ENCODE measurements at regions of chr5 and their contacts with region 1.

Region 1: DNA sequence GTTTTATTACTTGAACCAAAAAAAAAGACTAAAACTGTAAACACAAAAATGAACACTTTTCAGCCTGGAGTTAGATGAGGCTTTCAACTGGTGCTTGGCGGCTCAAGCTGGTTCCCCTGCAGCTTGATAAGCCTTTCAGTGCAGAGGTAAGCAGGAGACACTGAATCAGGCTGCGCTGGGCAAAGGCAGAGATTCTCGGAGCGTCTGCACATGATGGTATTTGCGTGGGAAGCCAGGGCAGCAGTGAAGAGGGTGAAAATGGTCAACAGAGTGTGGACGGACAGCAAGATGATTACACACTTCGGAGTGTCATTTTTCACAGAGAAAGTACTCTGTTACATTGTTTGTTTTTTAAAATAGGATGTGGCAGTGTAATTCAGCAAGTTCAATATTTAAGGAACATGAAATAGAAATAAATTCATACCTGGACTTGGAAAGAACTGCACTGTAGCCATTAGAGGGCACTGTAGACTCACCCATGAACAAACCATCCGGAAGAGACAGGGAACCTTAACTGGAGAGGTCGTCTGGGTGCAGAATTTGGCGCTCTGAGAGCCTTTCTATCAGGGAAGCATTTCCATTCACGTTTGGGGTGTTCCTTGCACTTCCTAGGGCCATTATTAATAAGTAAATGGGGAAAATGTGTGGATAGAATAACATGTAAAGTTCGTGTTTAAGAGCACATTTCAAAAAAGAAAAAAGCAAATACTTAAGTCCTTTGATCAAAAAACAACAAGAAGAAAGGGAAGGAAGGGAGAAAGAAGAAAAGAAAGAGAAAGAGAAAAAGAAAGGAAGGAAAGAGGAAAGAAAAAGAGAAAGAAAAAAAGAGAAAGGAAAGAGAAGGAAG is 69.8 kb downstream of the ICE1 start:
- DNase-seq: no peak

Region 2: GRCh38 chr5:5398046-5398445 is 94.3 kb before region 1 on chr5:
- intact Hi-C with region 1: no loop called
- DNase-seq: no peak

Region 3: DNA sequence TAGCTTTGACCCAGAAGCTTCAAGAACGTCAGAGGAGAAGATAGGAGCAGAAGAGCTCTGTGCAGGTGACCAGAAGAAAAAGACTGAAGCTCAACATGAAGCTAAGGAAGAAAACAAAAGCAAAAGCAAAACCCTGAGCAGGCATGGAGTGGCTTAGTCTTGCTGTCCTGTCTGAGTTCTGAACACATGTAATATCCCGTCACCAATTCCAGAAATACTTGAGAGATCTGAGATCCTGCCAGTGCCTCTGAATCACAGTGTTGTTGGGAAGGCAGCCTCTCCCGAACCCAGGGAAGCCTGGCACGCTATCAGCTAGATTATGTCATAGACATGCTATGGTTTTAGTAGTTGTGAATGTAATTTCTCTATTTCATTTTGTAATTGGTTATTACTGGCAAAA is 165.9 kb after region 1 on chr5:
- intact Hi-C with region 1: loop called (anchors 10 kb)
- DNase-seq: peak; percentile 80

Region 4: GRCh38 chr5:5688194-5688924 is 196.0 kb after region 1 on chr5:
- intact Hi-C with region 1: loop called (anchors 5 kb)
- DNase-seq: no peak

Region 5: GRCh38 chr5:5795074-5795771 is 302.9 kb after region 1 on chr5:
- intact Hi-C with region 1: loop called (anchors 10 kb)
- DNase-seq: peak; percentile 81

Region 6: DNA sequence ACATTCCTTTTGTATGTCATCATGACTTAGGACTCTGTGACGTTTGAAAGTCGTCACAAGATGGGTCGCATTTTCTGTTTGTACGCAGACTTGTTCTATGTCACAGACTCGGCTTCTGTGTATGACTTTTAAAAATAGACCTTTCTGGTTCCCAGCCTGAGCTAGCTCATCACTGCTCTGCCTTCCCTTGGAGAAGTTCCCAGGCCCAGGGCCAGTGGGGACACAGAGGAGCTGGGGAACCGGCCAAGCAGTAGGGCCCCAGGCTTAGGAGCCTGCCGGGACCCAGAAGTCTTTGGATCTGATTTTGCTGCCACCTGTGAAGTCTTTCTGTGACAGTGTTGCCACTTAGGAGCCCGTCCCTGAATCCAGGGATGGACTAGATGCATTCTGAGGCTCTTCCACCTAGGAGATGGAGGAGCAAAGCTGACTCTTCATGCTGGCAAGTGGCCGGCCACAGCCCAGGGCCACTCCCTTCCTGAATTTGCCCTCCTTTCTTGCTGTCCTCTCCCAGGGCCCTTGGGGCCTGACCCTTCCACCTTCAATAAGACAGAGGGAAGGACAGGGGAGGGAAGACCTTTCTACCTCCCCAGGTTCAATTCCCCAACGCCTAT is 938.2 kb after region 1 on chr5:
- intact Hi-C with region 1: loop called (anchors 5 kb)
- DNase-seq: peak; percentile 83

Region 7: DNA sequence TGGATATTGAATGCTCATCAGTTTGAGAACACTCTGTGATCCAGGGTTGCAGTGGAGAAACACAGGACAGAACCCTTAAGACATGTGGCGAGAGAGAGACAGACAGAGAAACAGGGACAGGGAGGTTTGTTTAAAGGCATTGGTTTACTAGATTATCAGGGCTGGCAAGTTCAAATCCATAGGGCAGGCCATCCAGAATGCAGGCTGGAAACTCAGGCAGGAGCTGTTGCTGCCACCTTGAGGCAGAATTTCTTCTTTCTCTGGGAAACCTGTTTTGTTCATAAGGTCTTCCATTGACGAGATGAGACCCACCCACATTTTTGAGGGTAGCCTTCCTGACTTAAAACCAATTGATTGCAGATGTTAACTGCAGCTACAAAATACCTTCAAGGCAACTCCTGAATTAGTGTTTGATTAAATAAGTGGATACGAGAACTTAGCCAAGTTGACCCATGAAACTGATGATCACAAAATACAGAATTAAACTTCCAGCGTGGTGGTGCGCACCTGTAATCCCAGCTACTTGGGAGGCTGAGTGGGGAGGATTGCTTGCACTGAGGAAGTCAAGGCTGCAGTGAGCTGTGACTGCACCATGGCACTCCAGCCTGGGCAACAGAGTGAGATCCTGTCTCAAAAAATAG is 1084.7 kb after region 1 on chr5:
- intact Hi-C with region 1: loop called (anchors 5 kb)
- DNase-seq: no peak

Region 8: DNA sequence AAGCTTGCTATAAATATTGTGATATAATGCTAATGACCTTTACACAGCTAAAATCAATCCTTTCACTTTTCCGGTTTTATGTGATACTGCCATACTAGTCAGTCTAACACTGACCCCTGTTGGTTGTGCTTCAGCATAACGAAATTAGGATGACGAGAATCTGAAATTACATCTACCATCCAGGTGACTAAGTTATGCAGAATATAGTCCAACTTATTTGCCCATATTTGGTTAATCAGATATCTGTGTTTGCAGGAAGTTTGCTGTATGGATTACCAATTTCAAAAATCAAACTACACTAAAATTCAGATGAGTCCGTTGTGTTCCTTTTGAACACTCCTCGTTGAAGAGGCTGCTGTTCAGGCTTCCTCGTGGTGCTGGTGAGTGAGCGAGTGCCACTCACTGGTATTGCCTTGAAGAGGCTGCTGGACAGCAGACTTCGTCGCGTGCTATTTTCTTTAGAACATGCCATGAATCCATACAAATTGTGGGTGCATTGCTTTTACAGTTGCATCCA is 1253.5 kb after region 1 on chr5:
- intact Hi-C with region 1: loop called (anchors 10 kb)
- DNase-seq: no peak